ENCODE measurements at regions of chr16 and their contacts with region 1.

Region 1: GRCh38 chr16:79601931-79602627 is 1.5 kb upstream of the MAF start:
- DNase-seq: peak in 1 of 2 donors; percentile 88
- H3K4me3 ChIP-seq: peak overlapping the region; percentile 80 to 97
- H3K27ac ChIP-seq: peak overlapping the region; percentile 83 to 94
- H3K4me1 ChIP-seq: peaks cover 0 to 6% of the 10 kb centered on the region in 2 donors
- H3K27me3 ChIP-seq: no peaks in the 10 kb centered on the region
- CTCF ChIP-seq: peak; percentile 59 to 85 (median 67)

Region 2: GRCh38 chr16:78099372-78100161 is 1502.5 kb before region 1 on chr16 and contains the start of gene WWOX:
- intact Hi-C with region 1: loop called (anchors 5 kb)
- DNase-seq: peak; percentile 91 to 99
- H3K4me3 ChIP-seq: peak within 1 kb of the TSS; percentile 67 to 98
- H3K27ac ChIP-seq: peak within 1 kb of the TSS; percentile 88 to 92
- H3K4me1 ChIP-seq: peaks cover 4 to 15% of the 10 kb centered on the region in 2 donors
- H3K27me3 ChIP-seq: no peaks in the 10 kb centered on the region
- CTCF ChIP-seq: peak; percentile 76 to 94 (median 81)
- total RNA-seq, gene WWOX: 106 TPM

Region 3: GRCh38 chr16:78503602-78504001 is 1098.5 kb before region 1 on chr16:
- intact Hi-C with region 1: loop called (anchors 2 kb)
- DNase-seq: no peak
- H3K4me3 ChIP-seq: no peak overlapping the region
- H3K27ac ChIP-seq: no peak overlapping the region
- H3K4me1 ChIP-seq: peaks cover 0 to 9% of the 10 kb centered on the region in 2 donors
- H3K27me3 ChIP-seq: no peaks in the 10 kb centered on the region
- CTCF ChIP-seq: peak; percentile 57 to 84 (median 75)

Region 4: GRCh38 chr16:79362300-79362970 is 239.6 kb before region 1 on chr16:
- intact Hi-C with region 1: no loop called
- DNase-seq: no peak
- H3K4me3 ChIP-seq: no peak overlapping the region
- H3K27ac ChIP-seq: no peak overlapping the region
- H3K4me1 ChIP-seq: no peaks in the 10 kb centered on the region
- H3K27me3 ChIP-seq: no peaks in the 10 kb centered on the region
- CTCF ChIP-seq: no peak

Region 5: DNA sequence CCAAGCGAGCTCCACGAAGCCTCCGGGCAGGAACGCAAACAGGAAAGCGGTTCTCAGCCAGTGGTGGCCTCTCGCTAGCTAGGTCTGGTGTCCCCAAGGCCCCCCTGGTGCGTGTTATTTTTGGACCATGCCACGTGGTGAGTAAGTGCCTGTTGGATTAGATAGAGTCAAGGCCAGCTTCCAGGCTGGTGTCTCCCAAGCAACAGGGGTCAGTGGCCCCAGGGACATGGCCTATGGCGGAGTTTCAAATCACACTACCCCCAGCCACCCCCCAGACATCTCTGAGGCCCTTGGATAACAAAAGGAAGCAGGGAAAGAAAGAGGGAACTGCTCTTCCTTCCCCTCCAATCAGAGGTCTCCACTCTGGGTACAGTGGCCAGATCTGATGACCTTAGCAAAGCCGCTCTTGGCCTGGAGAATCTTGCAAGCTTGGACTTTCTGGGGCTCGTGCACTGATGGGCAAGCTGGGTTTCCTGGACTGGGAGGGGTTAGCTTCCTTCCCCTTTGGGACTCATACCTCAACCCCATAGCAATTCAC is 59.8 kb before region 1 on chr16:
- intact Hi-C with region 1: no loop called
- DNase-seq: peak; percentile 21 to 68
- H3K4me3 ChIP-seq: no peak overlapping the region
- H3K27ac ChIP-seq: no peak overlapping the region
- H3K4me1 ChIP-seq: no peaks in the 10 kb centered on the region
- H3K27me3 ChIP-seq: no peaks in the 10 kb centered on the region
- CTCF ChIP-seq: no peak

Region 6: GRCh38 chr16:79673635-79674034 is 71.6 kb after region 1 on chr16:
- intact Hi-C with region 1: loop called (anchors 5 kb)
- DNase-seq: no peak
- H3K4me3 ChIP-seq: no peak overlapping the region
- H3K27ac ChIP-seq: peak overlapping the region; percentile 21 to 75
- H3K4me1 ChIP-seq: peaks cover 4 to 22% of the 10 kb centered on the region in 2 donors
- H3K27me3 ChIP-seq: no peaks in the 10 kb centered on the region
- CTCF ChIP-seq: no peak

Region 7: DNA sequence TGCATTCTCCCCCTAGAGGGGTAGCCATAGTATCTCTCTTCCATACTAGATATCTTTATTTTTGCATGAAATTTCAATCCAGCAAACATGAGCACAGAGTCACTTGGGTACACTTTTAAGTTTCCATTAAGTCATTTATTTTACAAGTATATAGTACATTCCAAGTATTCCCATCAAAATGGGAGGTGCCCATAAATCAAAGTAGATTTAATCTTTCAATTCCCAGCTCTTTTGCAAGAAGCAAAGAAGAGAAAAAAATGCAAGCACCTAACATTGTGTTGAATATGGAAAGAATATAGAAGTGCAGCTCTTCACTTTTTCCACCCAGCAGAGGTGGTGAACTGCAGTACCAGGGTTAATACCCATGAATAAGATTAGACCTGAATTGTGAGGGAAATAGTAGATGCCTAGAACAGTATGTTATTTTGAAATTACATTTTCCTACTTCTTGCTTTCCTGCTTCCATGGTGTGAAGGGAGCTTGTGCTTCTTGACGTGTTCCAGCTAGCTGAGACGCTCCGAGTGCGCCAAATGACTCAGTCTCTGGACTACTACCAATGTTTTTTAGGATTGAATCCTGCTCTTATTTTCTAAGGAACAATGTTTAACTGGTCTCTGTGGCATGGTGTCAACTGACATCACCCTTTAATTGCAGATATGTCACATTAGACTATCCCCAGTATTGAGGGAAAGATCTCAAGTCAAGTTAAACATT is 149.5 kb after region 1 on chr16:
- intact Hi-C with region 1: loop called (anchors 2 kb)
- DNase-seq: peak in 1 of 2 donors; percentile 82
- H3K4me3 ChIP-seq: no peak overlapping the region
- H3K27ac ChIP-seq: peak overlapping the region in 1 of 2 donors; percentile 60
- H3K4me1 ChIP-seq: peaks cover 0 to 10% of the 10 kb centered on the region in 2 donors
- H3K27me3 ChIP-seq: no peaks in the 10 kb centered on the region
- CTCF ChIP-seq: no peak

Measured in ascending aorta (tissue), 2 donors.